Esophagus muscularis mucosa (tissue), 4 donors: ENCODE measurements at regions of chr2 and their contacts with region 1.

Region 1: DNA sequence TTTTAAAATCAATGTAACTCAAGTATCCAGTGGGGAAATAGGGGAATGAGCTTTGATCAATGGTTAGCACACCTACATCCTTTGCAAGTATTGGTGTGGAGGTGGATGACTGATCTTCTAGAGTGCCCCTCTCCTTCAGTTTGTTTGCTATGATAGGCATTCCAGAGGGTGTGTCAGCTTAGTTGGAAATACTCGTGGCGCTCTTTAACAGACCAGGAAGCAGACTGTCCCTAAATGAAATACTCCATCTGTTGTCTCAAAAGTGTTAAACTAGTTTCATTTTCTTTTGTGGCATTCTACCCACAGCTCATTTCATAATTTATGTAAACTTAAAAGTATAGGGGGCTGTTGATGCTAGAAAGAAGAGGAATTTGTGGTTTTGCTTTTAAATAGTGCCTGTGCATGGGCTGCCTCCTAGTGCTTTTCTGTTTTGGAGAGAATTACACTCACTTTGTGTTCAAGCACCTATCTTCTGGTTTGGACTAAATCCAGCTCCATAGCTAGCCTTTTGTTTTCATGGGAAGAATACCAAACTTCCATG is 66.2 kb downstream of the STAT1 start:
- DNase-seq: no peak
- H3K4me3 ChIP-seq: peak overlapping the region in 2 of 4 donors; percentile 4 to 24
- H3K27ac ChIP-seq: peak overlapping the region; percentile 10 to 45 (median 32)
- H3K4me1 ChIP-seq: peaks cover 24 to 32% (median 30%) of the 10 kb centered on the region in 4 donors
- H3K27me3 ChIP-seq: no peaks in the 10 kb centered on the region
- CTCF ChIP-seq: no peak
- EP300 ChIP-seq: no peak
- POLR2A ChIP-seq: no peak

Region 2: DNA sequence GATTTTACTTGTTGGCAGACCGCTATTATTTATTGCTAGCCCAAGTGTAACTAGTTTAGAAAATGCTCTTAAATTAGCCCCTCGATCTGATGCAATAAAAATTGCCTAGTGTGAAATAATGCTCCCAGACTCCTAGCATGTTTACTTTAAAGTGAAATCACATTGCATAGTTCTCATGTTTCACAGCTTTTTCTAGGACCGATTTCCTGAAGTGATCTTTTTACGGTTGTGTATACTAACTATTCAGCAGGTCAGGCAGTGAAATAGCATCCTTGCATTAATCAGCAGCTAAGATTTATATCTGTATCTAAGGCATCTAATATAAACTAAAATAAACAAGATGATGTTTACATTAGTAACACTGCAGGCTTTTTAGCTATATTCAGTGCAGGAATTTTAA is 1111.1 kb before region 1 on chr2:
- intact Hi-C with region 1: no loop called
- DNase-seq: no peak
- H3K4me3 ChIP-seq: no peak overlapping the region
- H3K27ac ChIP-seq: no peak overlapping the region
- H3K4me1 ChIP-seq: peaks cover 0 to 16% (median 15%) of the 10 kb centered on the region in 4 donors
- H3K27me3 ChIP-seq: no peaks in the 10 kb centered on the region
- CTCF ChIP-seq: no peak
- EP300 ChIP-seq: no peak
- POLR2A ChIP-seq: no peak

Region 3: DNA sequence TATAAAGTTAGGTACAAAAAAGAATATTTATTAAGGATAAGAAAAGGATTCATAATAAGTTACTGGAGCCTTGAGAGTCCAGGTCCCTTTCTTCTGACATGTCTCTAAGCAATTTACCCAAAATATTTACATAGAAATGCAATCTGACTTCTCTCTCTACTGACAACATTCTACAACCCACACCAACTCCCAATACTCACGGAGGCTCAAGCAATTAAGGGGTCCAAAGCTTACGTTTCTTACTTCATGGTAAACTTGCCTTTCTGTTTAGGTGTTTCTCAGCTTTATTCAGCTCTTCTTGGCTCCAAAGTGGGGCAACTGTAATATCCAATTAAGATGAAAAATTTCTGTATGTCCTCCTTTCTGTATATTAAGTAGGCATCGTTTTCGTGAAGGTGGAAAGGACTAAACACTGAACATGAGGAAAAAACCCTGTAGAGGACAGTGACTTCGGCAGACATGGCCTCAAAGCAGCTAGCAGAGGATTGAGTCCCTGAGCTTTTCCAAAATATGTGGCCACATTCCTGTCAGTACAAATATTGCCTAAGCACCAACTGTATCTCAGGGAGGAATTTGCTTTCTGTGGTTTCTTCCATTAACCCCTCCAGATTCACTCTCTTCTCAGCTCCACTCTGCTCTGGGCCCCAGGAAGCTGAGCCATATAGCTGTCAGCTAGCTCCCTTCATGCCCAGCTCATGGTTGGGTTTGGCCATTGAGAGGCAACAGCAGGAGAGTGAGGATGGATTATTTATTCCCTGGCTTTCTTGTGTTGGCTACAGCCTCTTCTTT is 135.1 kb before region 1 on chr2:
- intact Hi-C with region 1: no loop called
- DNase-seq: no peak
- H3K4me3 ChIP-seq: no peak overlapping the region
- H3K27ac ChIP-seq: no peak overlapping the region
- H3K4me1 ChIP-seq: peaks cover 0 to 11% (median 7%) of the 10 kb centered on the region in 4 donors
- H3K27me3 ChIP-seq: no peaks in the 10 kb centered on the region
- CTCF ChIP-seq: no peak
- EP300 ChIP-seq: no peak
- POLR2A ChIP-seq: no peak

Region 4: GRCh38 chr2:190853531-190854383 is 94.0 kb before region 1 on chr2:
- intact Hi-C with region 1: loop called (anchors 10 kb)
- DNase-seq: no peak
- H3K4me3 ChIP-seq: no peak overlapping the region
- H3K27ac ChIP-seq: peak overlapping the region in 1 of 4 donors; percentile 9
- H3K4me1 ChIP-seq: peaks cover 0 to 27% (median 24%) of the 10 kb centered on the region in 4 donors
- H3K27me3 ChIP-seq: no peaks in the 10 kb centered on the region
- CTCF ChIP-seq: no peak
- EP300 ChIP-seq: no peak
- POLR2A ChIP-seq: no peak